PC-3 (cell line): ENCODE measurements at regions of chr5 and their contacts with region 1.

Region 1: DNA sequence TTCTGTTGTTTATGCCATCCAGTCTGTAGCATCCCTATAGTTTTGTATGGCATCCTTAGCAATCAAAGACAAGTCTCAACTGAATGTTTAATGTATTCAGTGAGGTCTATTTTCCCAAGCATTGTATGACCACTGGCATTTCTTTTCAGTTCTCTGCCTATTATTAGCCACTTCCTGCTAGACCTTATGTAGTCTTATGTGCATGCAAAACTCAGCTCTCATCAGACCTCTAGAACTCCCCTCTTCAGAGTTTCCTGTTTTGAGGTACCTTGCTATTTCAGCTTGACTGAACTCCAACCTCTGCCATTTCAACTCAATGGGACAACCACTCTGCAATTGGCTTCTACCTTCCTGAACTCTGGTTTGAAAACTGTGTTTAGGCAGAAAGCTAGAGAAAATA is 113.2 kb downstream of the SLC25A46 start:
- DNase-seq: no peak
- ATAC-seq: no peak
- H3K4me3 ChIP-seq: no peak overlapping the region
- H3K27ac ChIP-seq: no peak overlapping the region
- H3K4me1 ChIP-seq: peaks cover 22% of the 10 kb centered on the region
- H3K27me3 ChIP-seq: no peaks in the 10 kb centered on the region
- CTCF ChIP-seq: no peak

Region 2: GRCh38 chr5:110785326-110785725 is 66.7 kb before region 1 on chr5:
- CTCF ChIA-PET with region 1: no interaction called
- POLR2A ChIA-PET with region 1: no interaction called
- intact Hi-C with region 1: loop called (anchors 5 kb)
- DNase-seq: peak; percentile 96
- ATAC-seq: peak; percentile 93
- H3K4me3 ChIP-seq: peak overlapping the region; percentile 3; the same call in 1 of the 2 replicates
- H3K27ac ChIP-seq: peak overlapping the region; percentile 92
- H3K4me1 ChIP-seq: peaks cover 22% of the 10 kb centered on the region
- H3K27me3 ChIP-seq: no peaks in the 10 kb centered on the region
- CTCF ChIP-seq: no peak

Region 3: GRCh38 chr5:111337688-111338087 is 485.6 kb after region 1 on chr5:
- CTCF ChIA-PET with region 1: no interaction called
- POLR2A ChIA-PET with region 1: no interaction called
- intact Hi-C with region 1: no loop called
- DNase-seq: no peak
- ATAC-seq: no peak
- H3K4me3 ChIP-seq: no peak overlapping the region
- H3K27ac ChIP-seq: no peak overlapping the region
- H3K4me1 ChIP-seq: no peaks in the 10 kb centered on the region
- H3K27me3 ChIP-seq: peaks cover 37% of the 10 kb centered on the region
- CTCF ChIP-seq: no peak